GM10248 (cell line): ENCODE measurements at regions of chr3 and their contacts with region 1.

Region 1: GRCh38 chr3:4421121-4421520 is 45.9 kb downstream of the SUMF1 start:
- DNase-seq: peak; percentile 43
- CTCF ChIP-seq: no peak

Region 2: GRCh38 chr3:4406746-4407568 is 14.2 kb before region 1 on chr3:
- CTCF ChIA-PET with region 1: interaction called, 14 read pairs
- POLR2A ChIA-PET with region 1: interaction called, 3 read pairs
- DNase-seq: no peak
- CTCF ChIP-seq: no peak

Region 3: DNA sequence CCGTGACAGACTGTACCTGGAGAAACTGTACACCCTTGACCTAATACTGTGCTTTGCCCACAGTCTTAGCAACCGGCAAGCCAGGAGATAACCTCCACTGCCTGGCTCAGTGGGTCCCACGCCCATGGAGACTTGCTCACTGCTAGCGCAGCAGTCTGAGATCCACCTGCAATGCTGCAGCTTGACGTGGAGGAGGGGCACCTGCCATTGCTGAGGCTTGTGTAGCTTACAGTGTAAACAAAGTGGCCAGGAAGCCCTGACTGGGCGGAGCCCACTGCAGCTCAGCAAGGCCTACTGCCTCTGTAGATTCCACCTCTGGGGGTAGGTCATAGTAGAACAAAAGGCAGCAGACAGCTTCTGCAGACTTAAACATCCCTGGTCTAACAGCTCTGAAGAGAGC is 955.6 kb after region 1 on chr3:
- CTCF ChIA-PET with region 1: no interaction called
- POLR2A ChIA-PET with region 1: no interaction called
- DNase-seq: no peak
- CTCF ChIP-seq: no peak